Caco-2 (cell line): ENCODE measurements at regions of chr11 and their contacts with region 1.

Region 1: GRCh38 chr11:21511835-21512440 is 680.9 kb upstream of the ANO5 start:
- DNase-seq: peak; percentile 79 to 81
- H3K4me3 ChIP-seq: no peak overlapping the region
- H3K4me3 Mint-ChIP-seq: no peak overlapping the region
- H3K27ac Mint-ChIP-seq: no peak overlapping the region
- H3K4me1 ChIP-seq: no peaks in the 10 kb centered on the region
- H3K4me1 Mint-ChIP-seq: no peaks in the 10 kb centered on the region
- H3K27me3 ChIP-seq: no peaks in the 10 kb centered on the region
- H3K27me3 Mint-ChIP-seq: no peaks in the 10 kb centered on the region
- CTCF ChIP-seq: peak; percentile 66 to 89

Region 2: DNA sequence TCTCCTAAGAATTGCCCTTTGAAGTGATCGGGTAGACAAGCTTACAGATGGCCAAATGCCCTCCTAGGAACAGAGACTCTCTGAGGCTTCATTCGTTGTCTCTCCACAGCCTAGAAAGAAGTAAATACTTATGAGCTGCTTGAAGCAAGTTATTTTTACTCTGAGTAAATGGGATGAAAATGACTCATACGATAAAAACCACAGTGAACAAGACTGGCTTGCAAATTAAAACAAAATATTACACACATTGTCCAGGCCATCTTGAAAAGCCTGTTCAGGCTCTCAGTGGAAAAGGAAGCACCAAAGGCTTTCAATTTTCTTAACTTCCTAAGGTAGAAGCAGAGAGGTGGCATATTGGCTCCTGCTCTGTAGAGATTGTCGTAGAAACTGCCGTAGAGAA is 548.3 kb before region 1 on chr11:
- CTCF ChIA-PET with region 1: no interaction called
- POLR2A ChIA-PET with region 1: no interaction called
- intact Hi-C with region 1: loop called (anchors 10 kb)
- DNase-seq: no peak
- H3K4me3 ChIP-seq: no peak overlapping the region
- H3K4me3 Mint-ChIP-seq: no peak overlapping the region
- H3K27ac Mint-ChIP-seq: no peak overlapping the region
- H3K4me1 ChIP-seq: no peaks in the 10 kb centered on the region
- H3K4me1 Mint-ChIP-seq: no peaks in the 10 kb centered on the region
- H3K27me3 ChIP-seq: no peaks in the 10 kb centered on the region
- H3K27me3 Mint-ChIP-seq: peaks cover 12% of the 10 kb centered on the region
- CTCF ChIP-seq: no peak

Region 3: GRCh38 chr11:21190181-21190580 is 321.8 kb before region 1 on chr11:
- CTCF ChIA-PET with region 1: no interaction called
- POLR2A ChIA-PET with region 1: no interaction called
- intact Hi-C with region 1: loop called (anchors 5 kb)
- DNase-seq: no peak
- H3K4me3 ChIP-seq: no peak overlapping the region
- H3K4me3 Mint-ChIP-seq: no peak overlapping the region
- H3K27ac Mint-ChIP-seq: no peak overlapping the region
- H3K4me1 ChIP-seq: peaks cover 8% of the 10 kb centered on the region; the same call in 1 of the 2 replicates
- H3K4me1 Mint-ChIP-seq: no peaks in the 10 kb centered on the region
- H3K27me3 ChIP-seq: no peaks in the 10 kb centered on the region
- H3K27me3 Mint-ChIP-seq: no peaks in the 10 kb centered on the region
- CTCF ChIP-seq: no peak

Region 4: GRCh38 chr11:21475276-21475675 is 36.7 kb before region 1 on chr11:
- CTCF ChIA-PET with region 1: no interaction called
- POLR2A ChIA-PET with region 1: no interaction called
- intact Hi-C with region 1: loop called (anchors 1 kb)
- DNase-seq: no peak
- H3K4me3 ChIP-seq: no peak overlapping the region
- H3K4me3 Mint-ChIP-seq: no peak overlapping the region
- H3K27ac Mint-ChIP-seq: no peak overlapping the region
- H3K4me1 ChIP-seq: no peaks in the 10 kb centered on the region
- H3K4me1 Mint-ChIP-seq: no peaks in the 10 kb centered on the region
- H3K27me3 ChIP-seq: no peaks in the 10 kb centered on the region
- H3K27me3 Mint-ChIP-seq: no peaks in the 10 kb centered on the region
- CTCF ChIP-seq: no peak

Region 5: DNA sequence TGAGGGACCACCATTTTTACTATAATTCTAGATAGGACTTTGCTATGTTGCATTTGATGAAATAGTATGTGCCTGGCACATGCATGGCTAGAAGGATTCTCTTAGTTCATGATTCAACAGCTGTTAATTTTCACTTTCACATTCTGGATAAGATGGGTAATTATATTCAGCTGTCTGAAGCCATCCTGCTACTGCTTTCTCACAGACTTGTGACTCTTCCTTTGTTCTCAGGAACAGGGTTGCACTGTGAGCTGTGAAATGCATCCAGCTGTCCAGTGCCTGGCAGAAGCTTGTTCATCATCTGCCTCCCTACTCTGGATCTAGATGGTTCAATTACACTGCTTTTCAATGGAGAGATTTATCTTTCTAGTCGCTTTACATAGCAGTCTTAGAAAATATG is 70.9 kb after region 1 on chr11:
- CTCF ChIA-PET with region 1: no interaction called
- POLR2A ChIA-PET with region 1: no interaction called
- intact Hi-C with region 1: no loop called
- DNase-seq: no peak
- H3K4me3 ChIP-seq: no peak overlapping the region
- H3K4me3 Mint-ChIP-seq: no peak overlapping the region
- H3K27ac Mint-ChIP-seq: no peak overlapping the region
- H3K4me1 ChIP-seq: no peaks in the 10 kb centered on the region
- H3K4me1 Mint-ChIP-seq: no peaks in the 10 kb centered on the region
- H3K27me3 ChIP-seq: no peaks in the 10 kb centered on the region
- H3K27me3 Mint-ChIP-seq: peaks cover 3% of the 10 kb centered on the region
- CTCF ChIP-seq: no peak